Sciatic nerve (tissue), 2 donors: ENCODE measurements at regions of chr4 and their contacts with region 1.

Region 1: GRCh38 chr4:129515356-129515755 is 419.4 kb downstream of the C4orf33 start:
- DNase-seq: no peak
- ATAC-seq: no peak

Region 2: GRCh38 chr4:129474698-129475097 is 40.7 kb before region 1 on chr4:
- intact Hi-C with region 1: loop called (anchors 2 kb)
- DNase-seq: no peak
- ATAC-seq: no peak